ENCODE measurements at regions of chr2 and their contacts with region 1.

Region 1: DNA sequence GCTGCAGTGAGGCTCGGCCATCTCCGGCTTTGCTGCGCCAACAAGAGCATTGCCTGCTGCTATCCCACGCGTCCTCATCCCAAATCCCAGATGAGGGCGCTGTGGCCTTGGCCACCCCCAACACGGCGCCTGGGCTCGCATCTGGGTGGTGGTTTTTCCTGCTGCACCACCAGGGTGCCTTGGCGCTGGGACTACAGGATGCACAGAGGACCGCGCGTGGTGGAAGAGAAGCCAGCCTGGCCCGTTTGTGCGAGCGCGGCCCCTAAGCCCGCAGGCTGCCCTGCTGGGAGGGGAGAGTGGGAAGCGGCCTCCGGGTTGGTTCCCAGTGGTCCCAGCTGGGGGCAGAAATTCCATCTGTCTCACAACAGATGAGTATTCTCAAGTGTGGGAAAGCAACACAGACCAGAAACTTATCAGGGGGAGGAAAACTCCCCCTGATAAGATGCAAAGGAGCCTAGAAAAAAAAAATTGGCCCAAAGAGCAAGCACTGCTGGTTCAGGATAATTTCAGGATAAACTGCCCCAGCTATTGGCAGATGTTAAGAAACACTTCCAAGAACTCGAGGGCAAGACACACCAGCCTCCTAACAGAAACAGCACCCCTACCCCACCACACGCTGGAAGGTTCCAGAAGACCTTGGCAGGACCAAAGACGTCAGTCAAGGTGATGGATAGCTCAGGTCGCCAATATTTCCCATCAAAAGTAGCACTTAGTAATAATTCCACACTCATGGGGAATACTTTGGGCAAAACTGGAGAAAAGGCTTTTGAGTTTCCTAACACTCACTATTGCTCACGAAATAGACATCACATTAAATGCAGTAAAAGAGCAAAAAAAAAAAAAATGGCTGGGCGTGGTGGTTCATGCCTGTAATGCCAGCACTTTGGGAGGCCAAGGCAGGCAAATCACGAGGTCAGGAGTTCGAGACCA is 152.1 kb downstream of the PXDN start:
- DNase-seq: no peak
- H3K4me3 ChIP-seq: no peak overlapping the region
- H3K27ac ChIP-seq: no peak overlapping the region
- H3K4me1 ChIP-seq: peaks cover 32% of the 10 kb centered on the region
- H3K27me3 ChIP-seq: peaks cover 10% of the 10 kb centered on the region
- CTCF ChIP-seq: peak in 2 of 3 experiments; percentile 85 to 90

Region 2: GRCh38 chr2:1742681-1743395 is 150.6 kb after region 1 on chr2:
- dilution Hi-C with region 1: loop called (anchors 25 kb)
- DNase-seq: peak; percentile 35
- H3K4me3 ChIP-seq: peak overlapping the region; percentile 57 to 85 (median 63)
- H3K27ac ChIP-seq: peak overlapping the region; percentile 71
- H3K4me1 ChIP-seq: peaks cover 14% of the 10 kb centered on the region
- H3K27me3 ChIP-seq: peaks cover 24% of the 10 kb centered on the region
- CTCF ChIP-seq: peak; percentile 51 to 84 (median 67)

Measured in keratinocyte (primary cell).